HAP-1 (cell line): ENCODE measurements at regions of chr4 and their contacts with region 1.

Region 1: DNA sequence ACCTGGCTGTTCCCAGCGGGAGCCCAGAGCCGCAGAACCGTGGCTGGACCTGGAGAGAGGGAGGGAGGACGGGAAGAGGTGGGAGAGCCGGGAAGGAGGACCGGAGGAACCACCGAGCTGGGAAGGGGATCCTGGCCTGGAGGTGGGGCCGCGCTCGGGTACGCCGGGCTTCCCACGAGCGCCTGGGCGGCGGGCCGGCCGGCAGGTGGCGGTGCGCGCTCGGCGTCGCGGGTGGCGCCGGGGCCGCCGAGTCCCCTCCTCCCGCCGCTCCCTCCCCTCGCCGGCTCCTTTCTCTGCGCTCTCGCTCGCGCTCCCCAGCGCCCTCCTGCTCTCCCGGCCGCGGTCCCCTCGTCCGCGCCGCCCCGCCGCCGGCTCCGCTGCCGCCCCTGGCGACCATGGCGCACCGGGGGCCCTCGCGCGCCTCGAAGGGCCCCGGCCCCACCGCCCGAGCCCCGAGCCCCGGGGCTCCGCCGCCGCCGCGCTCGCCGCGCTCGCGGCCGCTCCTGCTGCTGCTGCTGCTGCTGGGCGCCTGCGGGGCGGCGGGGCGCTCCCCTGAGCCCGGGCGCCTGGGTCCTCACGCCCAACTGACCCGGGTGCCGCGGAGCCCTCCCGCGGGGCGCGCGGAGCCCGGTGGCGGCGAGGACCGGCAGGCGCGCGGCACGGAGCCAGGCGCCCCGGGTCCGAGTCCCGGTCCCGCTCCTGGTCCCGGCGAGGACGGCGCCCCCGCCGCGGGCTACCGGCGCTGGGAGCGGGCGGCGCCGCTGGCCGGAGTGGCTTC is at the start of gene SORCS2:
- DNase-seq: peak; percentile 46 to 74
- H3K4me3 ChIP-seq: 0 out of 2 replicates have a peak within 1 kb of the TSS, but pooled peaks have one; percentile 9
- H3K4me1 ChIP-seq: no peaks in the 10 kb centered on the region
- H3K27me3 ChIP-seq: peaks cover 79% of the 10 kb centered on the region

Region 2: DNA sequence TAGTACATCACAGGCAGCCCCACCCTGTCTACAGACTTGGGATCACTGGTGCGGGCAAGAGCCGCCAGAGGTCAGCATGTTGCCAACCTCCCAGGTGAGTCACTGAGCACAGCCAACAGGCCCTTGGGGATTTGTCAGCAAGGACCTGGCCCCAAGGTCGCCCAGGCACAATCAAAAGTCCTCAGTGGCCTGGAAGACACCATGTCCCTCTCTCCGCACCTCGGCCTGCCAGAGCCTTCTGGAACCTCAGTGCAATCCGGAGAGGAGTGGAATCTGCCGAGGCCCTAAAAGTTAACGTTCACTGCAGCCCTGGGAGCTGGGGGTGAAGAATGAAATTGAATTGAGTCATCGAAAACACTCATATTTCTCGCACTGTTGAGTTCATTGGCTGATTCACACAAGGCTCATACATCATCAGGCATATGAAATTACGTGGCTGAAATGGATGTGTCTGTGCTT is 848.5 kb before region 1 on chr4:
- in situ Hi-C with region 1: no loop called
- DNase-seq: no peak
- H3K4me3 ChIP-seq: no peak overlapping the region
- H3K4me1 ChIP-seq: no peaks in the 10 kb centered on the region
- H3K27me3 ChIP-seq: no peaks in the 10 kb centered on the region

Region 3: DNA sequence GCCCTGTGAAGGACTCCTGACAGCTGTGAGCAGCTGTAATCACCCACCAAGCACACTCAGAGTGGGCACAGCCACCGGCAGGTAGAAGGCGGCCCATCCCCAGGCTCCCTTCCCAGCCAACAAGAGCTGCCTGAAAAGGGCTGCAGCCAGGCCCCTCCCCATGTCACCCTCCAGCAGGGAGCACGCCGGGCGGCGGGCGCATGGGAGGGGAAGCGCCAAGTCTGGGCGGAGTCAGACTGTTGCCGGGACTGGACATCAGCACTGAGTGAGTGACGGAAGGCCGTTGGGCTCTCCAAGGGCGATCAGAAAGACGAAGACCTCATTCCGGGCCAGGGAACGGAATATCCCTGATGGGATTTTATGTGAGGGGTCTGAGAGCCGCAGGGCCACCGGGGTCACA is 802.1 kb before region 1 on chr4:
- in situ Hi-C with region 1: no loop called
- DNase-seq: no peak
- H3K4me3 ChIP-seq: no peak overlapping the region
- H3K4me1 ChIP-seq: no peaks in the 10 kb centered on the region
- H3K27me3 ChIP-seq: no peaks in the 10 kb centered on the region

Region 4: DNA sequence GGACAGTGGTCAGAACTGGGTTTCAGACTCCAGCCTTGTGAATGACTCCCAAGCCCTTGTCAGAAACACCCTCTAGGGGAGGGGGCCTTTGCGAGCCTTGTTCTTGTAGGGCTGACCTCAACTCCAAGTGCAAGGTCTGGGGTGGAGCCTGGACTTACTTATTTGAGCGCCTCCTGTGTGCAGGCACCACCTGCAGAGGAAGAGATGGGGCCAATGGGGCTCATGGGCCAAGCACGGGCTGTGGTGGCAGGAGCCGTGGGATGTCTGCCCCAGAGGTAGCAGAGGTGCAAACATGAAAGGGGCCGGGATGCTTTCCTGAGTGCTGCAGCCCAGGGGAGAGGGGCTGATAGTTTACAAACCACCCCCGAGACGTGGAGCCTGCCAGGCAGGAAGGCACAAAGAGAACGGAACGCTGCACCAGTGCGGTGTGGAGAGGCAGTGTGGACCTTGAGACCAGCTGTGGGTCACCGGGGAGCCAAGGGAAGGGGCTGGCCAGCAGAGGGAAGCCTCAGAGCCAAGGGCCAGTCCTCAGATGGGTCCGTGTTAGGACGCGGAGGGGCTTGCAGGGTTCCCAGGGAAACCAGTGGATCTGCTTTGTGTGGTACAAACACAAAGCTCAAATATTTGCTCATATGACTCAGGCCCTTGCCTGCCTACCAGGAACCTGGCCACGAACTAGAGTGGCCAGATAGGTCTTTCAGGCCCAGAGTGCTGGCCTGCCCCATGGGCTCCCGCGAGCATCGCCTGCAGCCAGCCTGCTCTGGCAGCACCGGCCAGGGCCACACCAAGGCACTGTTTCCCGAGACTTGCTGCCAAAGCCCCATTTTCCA is 158.0 kb before region 1 on chr4:
- in situ Hi-C with region 1: no loop called
- DNase-seq: no peak
- H3K4me3 ChIP-seq: no peak overlapping the region
- H3K4me1 ChIP-seq: no peaks in the 10 kb centered on the region
- H3K27me3 ChIP-seq: no peaks in the 10 kb centered on the region

Region 5: GRCh38 chr4:7719354-7720174 is 527.1 kb after region 1 on chr4:
- in situ Hi-C with region 1: loop called (anchors 25 kb)
- DNase-seq: peak; percentile 13 to 91
- H3K4me3 ChIP-seq: peak overlapping the region; percentile 17
- H3K4me1 ChIP-seq: no peaks in the 10 kb centered on the region
- H3K27me3 ChIP-seq: peaks cover 17% of the 10 kb centered on the region